ENCODE measurements at regions of chr14 and their contacts with region 1.

Region 1: GRCh38 chr14:91919814-91920213 is 27.7 kb downstream of the FBLN5 start:
- DNase-seq: no peak
- H3K4me3 ChIP-seq: no peak overlapping the region
- CTCF ChIP-seq: no peak

Region 2: DNA sequence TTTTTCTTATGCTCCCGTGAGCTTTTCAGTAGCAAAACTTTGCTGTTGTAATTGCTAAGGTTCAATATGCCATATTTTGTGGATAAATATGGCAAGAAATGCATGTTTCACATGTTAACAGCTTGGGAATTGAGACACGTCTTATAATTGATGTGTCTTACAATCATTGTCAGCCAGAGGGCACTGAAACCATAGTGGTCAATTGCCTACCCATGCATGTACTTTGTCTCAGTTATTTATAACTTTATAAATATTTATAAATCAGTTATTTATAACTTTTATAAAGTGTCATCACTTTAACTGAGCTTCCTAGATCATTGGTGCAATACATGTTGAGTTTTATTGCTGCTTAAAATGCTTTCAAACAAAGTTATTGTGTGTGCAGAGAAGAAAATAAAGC is 269.9 kb before region 1 on chr14:
- in situ Hi-C with region 1: loop called (anchors 5 kb)
- DNase-seq: peak; percentile 26
- H3K4me3 ChIP-seq: no peak overlapping the region
- CTCF ChIP-seq: peak; percentile 48